Dendritic cell treated with granulocyte-macrophage colony-stimulating factor and Interleukin-4, amounts not matched to agents 40 ng/mL and 50 ng/mL, for 4 days (primary cell): ENCODE measurements at regions of chr7 and their contacts with region 1.

Region 1: DNA sequence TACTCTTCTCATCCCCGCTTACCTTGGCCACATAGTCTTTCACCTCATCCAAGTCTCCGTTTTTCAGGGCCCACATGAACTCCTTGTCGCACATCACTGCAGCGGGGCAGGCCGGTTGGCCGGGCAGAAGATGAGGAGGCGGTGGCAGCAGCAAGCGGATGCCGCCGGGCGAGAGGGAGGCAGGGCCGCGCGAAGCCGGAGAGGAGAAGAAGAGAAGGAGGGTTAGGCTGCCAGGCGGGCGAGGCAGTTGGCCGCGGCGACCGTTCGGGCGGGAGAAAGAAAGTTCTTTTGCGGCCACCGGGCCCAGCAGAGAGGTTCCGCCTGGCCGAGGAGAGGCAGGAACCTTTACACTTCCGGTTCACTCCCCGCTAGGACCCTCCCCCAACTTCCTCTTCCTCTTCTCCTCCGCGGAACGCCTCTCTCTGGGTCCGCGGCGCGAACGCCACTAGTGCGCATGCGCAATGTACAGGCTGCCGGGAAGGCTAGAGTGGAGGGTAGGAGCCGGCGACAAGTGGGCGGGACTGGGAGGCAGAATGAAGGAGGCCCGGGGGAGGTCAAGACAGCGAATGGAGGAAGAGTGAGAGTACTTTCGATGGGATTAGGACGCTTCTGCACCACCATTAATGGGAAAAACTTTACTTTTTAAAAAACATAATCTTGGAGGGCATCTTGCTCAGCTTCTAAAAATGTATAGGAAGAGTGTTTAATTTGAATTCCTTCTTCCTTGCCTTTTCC is at the start of gene MTPN:
- H3K4me3 Mint-ChIP-seq: peak within 1 kb of the TSS; percentile 95
- H3K27ac Mint-ChIP-seq: peak within 1 kb of the TSS; percentile 91
- H3K4me1 Mint-ChIP-seq: peaks cover 63% of the 10 kb centered on the region
- H3K27me3 Mint-ChIP-seq: no peaks in the 10 kb centered on the region

Region 2: GRCh38 chr7:135662373-135663114 is 314.6 kb before region 1 on chr7 and contains the start of gene STMP1:
- intact Hi-C with region 1: loop called (anchors 2 kb)
- H3K4me3 Mint-ChIP-seq: peak within 1 kb of the TSS; percentile 96
- H3K27ac Mint-ChIP-seq: peak within 1 kb of the TSS; percentile 99
- H3K4me1 Mint-ChIP-seq: peaks cover 44% of the 10 kb centered on the region
- H3K27me3 Mint-ChIP-seq: no peaks in the 10 kb centered on the region